Dendritic cell treated with granulocyte-macrophage colony-stimulating factor and Interleukin-4, amounts not matched to agents 40 ng/mL and 50 ng/mL, for 4 days (primary cell): ENCODE measurements at regions of chr1 and their contacts with region 1.

Region 1: DNA sequence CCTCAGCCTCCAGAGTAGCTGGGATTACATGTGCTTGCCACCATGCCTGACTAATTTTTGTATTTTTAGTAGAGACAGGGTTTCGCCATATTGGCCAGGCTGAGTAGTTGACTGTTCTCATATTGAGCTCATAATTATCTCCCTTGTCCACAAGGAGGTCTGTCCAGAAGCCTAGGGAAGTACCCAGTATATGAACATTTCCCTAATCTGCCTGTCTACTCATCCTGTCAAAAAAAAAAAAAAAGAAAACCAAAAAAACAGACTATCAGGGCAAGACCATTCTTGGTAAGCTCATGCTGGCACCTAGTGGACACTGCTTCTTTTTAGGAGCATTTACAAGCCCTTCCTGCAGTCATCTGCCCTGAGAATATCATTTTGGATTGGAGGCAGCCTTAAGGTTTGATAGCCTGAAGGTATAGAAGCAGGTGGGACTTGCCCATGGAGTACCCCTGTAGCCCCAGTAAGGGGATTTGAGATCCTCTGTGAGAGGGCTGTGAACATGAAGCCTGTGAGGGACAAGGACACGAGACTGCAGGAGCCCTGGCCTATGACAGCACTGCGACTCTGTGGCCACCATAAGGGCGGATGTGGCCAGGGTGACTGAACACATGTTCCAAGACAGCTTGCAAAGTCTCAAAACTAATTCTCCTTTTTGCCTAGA is 10.8 kb upstream of the DUSP12 start:
- H3K4me3 Mint-ChIP-seq: no peak overlapping the region
- H3K27ac Mint-ChIP-seq: peak overlapping the region; percentile 90
- H3K4me1 Mint-ChIP-seq: peaks cover 55% of the 10 kb centered on the region
- H3K27me3 Mint-ChIP-seq: peaks cover 11% of the 10 kb centered on the region

Region 2: GRCh38 chr1:161688946-161689345 is 49.8 kb before region 1 on chr1:
- intact Hi-C with region 1: loop called (anchors 10 kb)
- H3K4me3 Mint-ChIP-seq: no peak overlapping the region
- H3K27ac Mint-ChIP-seq: no peak overlapping the region
- H3K4me1 Mint-ChIP-seq: peaks cover 18% of the 10 kb centered on the region
- H3K27me3 Mint-ChIP-seq: peaks cover 63% of the 10 kb centered on the region